ENCODE measurements at regions of chr20 and their contacts with region 1.

Region 1: GRCh38 chr20:44979090-44979621 is 12.8 kb downstream of the STK4 start:
- DNase-seq: peak; percentile 86 to 94 (median 88)
- H3K4me3 ChIP-seq: peak overlapping the region; percentile 11 to 33
- H3K4me3 Mint-ChIP-seq: peak overlapping the region; percentile 67 to 91 (median 83)
- H3K27ac ChIP-seq: peak overlapping the region; percentile 84
- H3K27ac Mint-ChIP-seq: peak overlapping the region; percentile 92 to 99 (median 97)
- H3K4me1 ChIP-seq: peaks cover 98% of the 10 kb centered on the region
- H3K4me1 Mint-ChIP-seq: peaks cover 65 to 94% (median 80%) of the 10 kb centered on the region in 4 donors
- H3K27me3 ChIP-seq: no peaks in the 10 kb centered on the region
- H3K27me3 Mint-ChIP-seq: no peaks in the 10 kb centered on the region

Region 2: GRCh38 chr20:44960103-44960852 is 18.9 kb before region 1 on chr20 and contains the start of gene TOMM34:
- CTCF ChIA-PET with region 1: interaction called, 63 read pairs
- POLR2A ChIA-PET with region 1: interaction called, 246 read pairs
- intact Hi-C with region 1: loop called (anchors 2 kb)
- DNase-seq: peak; percentile 89 to 91 (median 90)
- H3K4me3 ChIP-seq: peak within 1 kb of the TSS; percentile 54 to 67
- H3K4me3 Mint-ChIP-seq: peak within 1 kb of the TSS; percentile 94 to 100 (median 98)
- H3K27ac ChIP-seq: peak within 1 kb of the TSS; percentile 66
- H3K27ac Mint-ChIP-seq: peak within 1 kb of the TSS; percentile 84 to 99 (median 96)
- H3K4me1 ChIP-seq: peaks cover 34% of the 10 kb centered on the region
- H3K4me1 Mint-ChIP-seq: peaks cover 35 to 51% (median 38%) of the 10 kb centered on the region in 4 donors
- H3K27me3 ChIP-seq: no peaks in the 10 kb centered on the region
- H3K27me3 Mint-ChIP-seq: no peaks in the 10 kb centered on the region
- total RNA-seq, gene TOMM34: 7.6 to 8.5 TPM

Region 3: GRCh38 chr20:44990425-44990824 is 11.3 kb after region 1 on chr20:
- CTCF ChIA-PET with region 1: interaction called, 12 read pairs
- POLR2A ChIA-PET with region 1: interaction called, 25 read pairs
- intact Hi-C with region 1: loop called (anchors 1 kb)
- DNase-seq: peak in 1 of 5 donors; percentile 16
- H3K4me3 ChIP-seq: peak overlapping the region; percentile 25 to 34
- H3K4me3 Mint-ChIP-seq: peak overlapping the region; percentile 73 to 89 (median 88)
- H3K27ac ChIP-seq: peak overlapping the region; percentile 68
- H3K27ac Mint-ChIP-seq: peak overlapping the region; percentile 82 to 94 (median 91)
- H3K4me1 ChIP-seq: peaks cover 94% of the 10 kb centered on the region
- H3K4me1 Mint-ChIP-seq: peaks cover 45 to 89% (median 69%) of the 10 kb centered on the region in 4 donors
- H3K27me3 ChIP-seq: no peaks in the 10 kb centered on the region
- H3K27me3 Mint-ChIP-seq: no peaks in the 10 kb centered on the region

Region 4: DNA sequence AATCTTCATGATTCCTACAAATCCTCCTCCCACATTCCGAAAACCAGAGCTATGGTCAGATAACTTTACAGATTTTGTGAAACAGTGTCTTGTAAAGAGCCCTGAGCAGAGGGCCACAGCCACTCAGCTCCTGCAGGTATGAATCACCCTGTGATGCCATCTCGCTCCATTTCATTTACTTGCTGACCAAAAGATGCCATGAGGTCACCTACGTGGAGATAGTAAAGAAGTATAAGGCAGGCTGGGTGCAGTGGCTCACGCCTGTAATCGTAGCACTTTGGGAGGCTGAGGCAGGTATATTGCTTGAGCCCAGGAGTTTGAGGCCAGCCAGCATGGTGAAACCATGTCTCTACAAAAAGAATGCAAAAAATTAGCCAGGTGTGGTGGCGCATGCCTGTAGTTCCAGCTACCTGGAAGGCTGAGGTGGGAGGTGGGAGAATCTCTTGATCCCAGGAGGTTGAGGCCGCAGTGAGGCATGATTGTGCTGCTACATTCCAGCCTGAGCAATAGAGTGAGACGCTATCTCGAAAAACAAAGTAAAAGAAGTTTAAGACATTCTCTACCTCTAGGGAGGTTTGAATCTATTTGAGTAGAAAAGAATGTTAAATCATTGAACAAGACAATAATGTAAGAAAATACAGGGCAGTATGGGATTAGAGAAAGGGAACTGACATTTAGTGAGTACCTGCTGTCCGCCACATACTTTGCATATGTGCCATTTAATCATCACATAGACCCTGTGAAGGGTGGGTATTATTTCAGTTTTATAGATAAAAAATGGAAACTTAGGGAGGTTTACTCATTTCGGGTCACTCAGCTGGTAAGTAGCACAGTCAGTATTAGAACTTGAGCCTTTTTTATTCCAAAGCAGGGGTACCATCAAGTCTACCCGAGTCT is 18.3 kb after region 1 on chr20:
- CTCF ChIA-PET with region 1: interaction called, 12 read pairs
- POLR2A ChIA-PET with region 1: interaction called, 16 read pairs
- intact Hi-C with region 1: no loop called
- DNase-seq: no peak
- H3K4me3 ChIP-seq: no peak overlapping the region
- H3K4me3 Mint-ChIP-seq: peak overlapping the region in 2 of 8 donors; percentile 17 to 39
- H3K27ac ChIP-seq: no peak overlapping the region
- H3K27ac Mint-ChIP-seq: peak overlapping the region; percentile 11 to 90 (median 61)
- H3K4me1 ChIP-seq: peaks cover 60% of the 10 kb centered on the region
- H3K4me1 Mint-ChIP-seq: peaks cover 42 to 82% (median 62%) of the 10 kb centered on the region in 4 donors
- H3K27me3 ChIP-seq: no peaks in the 10 kb centered on the region
- H3K27me3 Mint-ChIP-seq: no peaks in the 10 kb centered on the region

Region 5: DNA sequence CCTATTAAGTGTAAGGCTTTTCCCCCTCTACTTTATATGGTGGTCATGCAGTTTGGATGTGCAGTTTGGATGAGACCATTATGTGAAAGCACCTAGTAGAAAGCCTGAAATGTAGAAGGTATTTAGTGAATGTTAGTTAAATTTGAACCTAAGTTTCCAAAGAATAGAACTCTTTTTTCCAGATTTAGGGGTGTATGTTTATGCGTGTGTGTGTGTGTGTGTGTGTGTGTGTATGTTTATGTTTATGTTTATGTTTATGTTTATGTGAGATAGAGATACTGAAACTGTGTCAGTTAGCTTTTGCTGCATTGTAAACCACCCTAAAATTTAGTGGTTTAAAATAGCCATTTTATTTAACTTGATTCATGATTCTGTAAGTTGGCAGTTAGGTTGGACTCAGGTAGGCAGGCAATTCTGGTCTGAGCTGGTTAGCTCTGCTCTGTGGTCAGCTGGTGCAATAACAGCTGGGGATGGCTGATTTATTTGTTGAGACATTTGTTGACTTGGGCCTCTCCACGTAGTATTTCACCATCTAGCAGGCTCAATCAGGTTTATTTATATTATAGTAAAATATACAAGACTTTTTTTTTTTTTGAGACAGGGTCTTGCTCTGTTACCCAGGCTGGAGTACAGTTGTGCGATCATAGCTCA is 41.2 kb after region 1 on chr20:
- CTCF ChIA-PET with region 1: no interaction called
- POLR2A ChIA-PET with region 1: no interaction called
- intact Hi-C with region 1: no loop called
- DNase-seq: no peak
- H3K4me3 ChIP-seq: no peak overlapping the region
- H3K4me3 Mint-ChIP-seq: peak overlapping the region in 1 of 8 donors; percentile 48
- H3K27ac ChIP-seq: no peak overlapping the region
- H3K27ac Mint-ChIP-seq: peak overlapping the region in 4 of 7 donors; percentile 20 to 78 (median 68)
- H3K4me1 ChIP-seq: peaks cover 75% of the 10 kb centered on the region
- H3K4me1 Mint-ChIP-seq: peaks cover 50 to 78% (median 62%) of the 10 kb centered on the region in 4 donors
- H3K27me3 ChIP-seq: no peaks in the 10 kb centered on the region
- H3K27me3 Mint-ChIP-seq: no peaks in the 10 kb centered on the region

Measured in CD4-positive, alpha-beta memory T cell (primary cell).